AG04450 (cell line): ENCODE measurements at regions of chr4 and their contacts with region 1.

Region 1: DNA sequence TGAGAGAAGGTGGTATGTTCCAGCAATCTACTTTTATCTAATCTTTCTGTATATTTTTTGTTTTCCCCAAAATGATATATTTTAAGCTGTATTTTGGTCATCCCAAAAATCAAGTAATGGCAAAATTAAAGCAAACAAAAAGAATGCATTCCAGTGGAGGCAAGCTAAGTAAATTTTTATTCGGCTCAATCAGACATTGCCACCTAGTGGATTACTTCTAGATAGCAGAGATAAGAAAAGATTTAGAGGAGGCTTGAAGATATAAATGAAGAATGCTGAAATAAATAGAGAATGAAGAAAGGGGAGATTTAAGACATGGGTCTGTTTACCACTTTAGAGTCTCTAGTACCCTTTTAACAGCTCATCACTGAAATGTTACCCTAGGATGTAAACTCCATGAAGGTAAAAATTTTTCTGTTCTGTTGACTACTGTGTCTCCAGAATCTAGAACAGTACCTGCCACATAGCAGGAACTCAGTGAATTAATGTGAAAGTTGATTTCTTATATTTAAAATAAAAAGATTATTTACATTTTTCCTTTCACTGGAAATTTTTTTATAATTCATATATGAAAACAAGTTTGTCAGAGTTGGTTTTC is 110.9 kb upstream of the ANK2 start:
- DNase-seq: peak; percentile 1
- H3K4me3 ChIP-seq: no peak overlapping the region
- H3K27ac ChIP-seq: no peak overlapping the region
- H3K27me3 ChIP-seq: no peaks in the 10 kb centered on the region
- CTCF ChIP-seq: peak; percentile 74

Region 2: GRCh38 chr4:112765317-112765975 is 173.1 kb before region 1 on chr4:
- CTCF ChIA-PET with region 1: interaction called, 93 read pairs
- POLR2A ChIA-PET with region 1: no interaction called
- DNase-seq: no peak
- H3K4me3 ChIP-seq: no peak overlapping the region
- H3K27ac ChIP-seq: no peak overlapping the region
- H3K27me3 ChIP-seq: no peaks in the 10 kb centered on the region
- CTCF ChIP-seq: peak; percentile 55

Region 3: GRCh38 chr4:112916868-112917267 is 21.7 kb before region 1 on chr4:
- CTCF ChIA-PET with region 1: interaction called, 10 read pairs
- POLR2A ChIA-PET with region 1: no interaction called
- DNase-seq: no peak
- H3K4me3 ChIP-seq: no peak overlapping the region
- H3K27ac ChIP-seq: no peak overlapping the region
- H3K27me3 ChIP-seq: no peaks in the 10 kb centered on the region
- CTCF ChIP-seq: no peak

Region 4: GRCh38 chr4:112951362-112952312 is 13.1 kb after region 1 on chr4:
- CTCF ChIA-PET with region 1: interaction called, 92 read pairs
- POLR2A ChIA-PET with region 1: no interaction called
- DNase-seq: no peak
- H3K4me3 ChIP-seq: no peak overlapping the region
- H3K27ac ChIP-seq: no peak overlapping the region
- H3K27me3 ChIP-seq: no peaks in the 10 kb centered on the region
- CTCF ChIP-seq: peak; percentile 58